ENCODE measurements at regions of chr1 and their contacts with region 1.

Region 1: DNA sequence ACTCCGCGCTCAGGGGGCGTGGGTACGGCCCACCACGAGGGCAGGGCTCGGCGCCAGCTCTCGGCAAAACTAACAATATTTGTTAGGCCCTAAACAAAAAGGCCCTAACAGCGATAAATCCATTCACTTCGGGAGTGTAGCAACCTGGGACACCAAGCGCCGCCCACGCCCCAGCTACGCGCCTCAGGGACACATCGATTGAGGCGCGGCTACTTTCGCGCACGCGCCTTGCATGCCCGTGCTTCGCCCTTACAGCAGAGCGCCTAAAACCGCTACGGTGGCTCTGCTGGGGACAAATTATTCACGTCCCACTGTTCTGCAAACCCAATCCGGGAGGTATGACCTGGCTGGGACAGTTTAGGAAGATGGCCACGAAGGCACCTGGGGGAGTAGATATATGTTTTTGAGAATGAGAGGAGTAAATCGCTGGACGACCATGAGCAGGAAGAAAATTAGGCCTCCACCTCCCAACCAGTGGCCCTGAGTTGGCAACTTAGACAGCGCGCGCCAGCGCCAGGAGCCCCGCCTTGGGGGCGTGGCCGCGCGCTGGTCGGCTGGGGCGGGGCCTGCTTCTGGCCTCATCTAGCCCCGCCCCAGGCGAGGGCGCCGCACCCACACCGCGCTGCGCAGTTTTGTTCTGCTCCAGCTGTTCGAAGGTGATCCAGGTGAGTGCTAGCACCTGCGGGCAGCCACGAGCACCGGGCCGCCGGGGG is at the start of gene MGST3:
- DNase-seq: peak; percentile 93 to 97 (median 94)
- H3K4me3 ChIP-seq: peak within 1 kb of the TSS; percentile 86 to 97
- H3K4me3 Mint-ChIP-seq: no peak within 1 kb of the TSS
- H3K27ac ChIP-seq: peak within 1 kb of the TSS; percentile 69
- H3K27ac Mint-ChIP-seq: peak within 1 kb of the TSS in 1 of 7 donors; percentile 85
- H3K4me1 ChIP-seq: peaks cover 35% of the 10 kb centered on the region
- H3K4me1 Mint-ChIP-seq: peaks cover 15 to 22% (median 18%) of the 10 kb centered on the region in 4 donors
- H3K27me3 ChIP-seq: no peaks in the 10 kb centered on the region
- H3K27me3 Mint-ChIP-seq: no peaks in the 10 kb centered on the region
- total RNA-seq, gene MGST3: 67.6 to 74.0 TPM

Region 2: GRCh38 chr1:165645654-165646366 is 15.0 kb after region 1 on chr1:
- CTCF ChIA-PET with region 1: no interaction called
- POLR2A ChIA-PET with region 1: interaction called, 10 read pairs
- intact Hi-C with region 1: no loop called
- DNase-seq: peak; percentile 29 to 59 (median 55)
- H3K4me3 ChIP-seq: no peak overlapping the region
- H3K4me3 Mint-ChIP-seq: peak overlapping the region in 7 of 8 donors; percentile 2 to 65 (median 39)
- H3K27ac ChIP-seq: no peak overlapping the region
- H3K27ac Mint-ChIP-seq: peak overlapping the region in 5 of 7 donors; percentile 37 to 71 (median 54)
- H3K4me1 ChIP-seq: peaks cover 22% of the 10 kb centered on the region
- H3K4me1 Mint-ChIP-seq: peaks cover 18 to 33% (median 24%) of the 10 kb centered on the region in 4 donors
- H3K27me3 ChIP-seq: no peaks in the 10 kb centered on the region
- H3K27me3 Mint-ChIP-seq: no peaks in the 10 kb centered on the region

Region 3: GRCh38 chr1:165697881-165698760 is 67.3 kb after region 1 on chr1 and contains the start of gene ALDH9A1:
- CTCF ChIA-PET with region 1: interaction called, 3 read pairs
- POLR2A ChIA-PET with region 1: interaction called, 25 read pairs
- intact Hi-C with region 1: loop called (anchors 1 kb)
- DNase-seq: peak; percentile 86 to 91 (median 87)
- H3K4me3 ChIP-seq: peak within 1 kb of the TSS; percentile 95 to 97
- H3K4me3 Mint-ChIP-seq: peak within 1 kb of the TSS; percentile 92 to 100 (median 98)
- H3K27ac ChIP-seq: peak within 1 kb of the TSS; percentile 79
- H3K27ac Mint-ChIP-seq: peak within 1 kb of the TSS; percentile 91 to 99 (median 97)
- H3K4me1 ChIP-seq: peaks cover 21% of the 10 kb centered on the region
- H3K4me1 Mint-ChIP-seq: peaks cover 15 to 39% (median 27%) of the 10 kb centered on the region in 4 donors
- H3K27me3 ChIP-seq: no peaks in the 10 kb centered on the region
- H3K27me3 Mint-ChIP-seq: no peaks in the 10 kb centered on the region
- total RNA-seq, gene ALDH9A1: 45.2 to 47.1 TPM

Region 4: GRCh38 chr1:165827268-165828102 is 196.7 kb after region 1 on chr1 and contains the start of gene UCK2:
- CTCF ChIA-PET with region 1: no interaction called
- POLR2A ChIA-PET with region 1: no interaction called
- intact Hi-C with region 1: loop called (anchors 10 kb)
- DNase-seq: peak; percentile 37 to 50 (median 43)
- H3K4me3 ChIP-seq: peak within 1 kb of the TSS; percentile 73 to 81
- H3K4me3 Mint-ChIP-seq: peak within 1 kb of the TSS; percentile 91 to 96 (median 93)
- H3K27ac ChIP-seq: peak within 1 kb of the TSS; percentile 45
- H3K27ac Mint-ChIP-seq: peak within 1 kb of the TSS; percentile 16 to 91 (median 83)
- H3K4me1 ChIP-seq: peaks cover 12% of the 10 kb centered on the region
- H3K4me1 Mint-ChIP-seq: peaks cover 11 to 24% (median 18%) of the 10 kb centered on the region in 4 donors
- H3K27me3 ChIP-seq: no peaks in the 10 kb centered on the region
- H3K27me3 Mint-ChIP-seq: no peaks in the 10 kb centered on the region
- total RNA-seq, gene UCK2: 2.1 to 2.7 TPM